Gastrocnemius medialis (tissue), 4 donors: ENCODE measurements at regions of chr14 and their contacts with region 1.

Region 1: GRCh38 chr14:92951912-92952471 is 29.0 kb downstream of the CHGA start:
- DNase-seq: peak; percentile 39 to 55
- ATAC-seq: peak; percentile 79 to 86
- H3K4me3 ChIP-seq: no peak overlapping the region
- H3K27ac ChIP-seq: no peak overlapping the region
- H3K4me1 ChIP-seq: peaks cover 0 to 3% of the 10 kb centered on the region in 2 donors
- H3K27me3 ChIP-seq: no peaks in the 10 kb centered on the region
- CTCF ChIP-seq: peak; percentile 81 to 95 (median 93)
- POLR2A ChIP-seq: no peak

Region 2: DNA sequence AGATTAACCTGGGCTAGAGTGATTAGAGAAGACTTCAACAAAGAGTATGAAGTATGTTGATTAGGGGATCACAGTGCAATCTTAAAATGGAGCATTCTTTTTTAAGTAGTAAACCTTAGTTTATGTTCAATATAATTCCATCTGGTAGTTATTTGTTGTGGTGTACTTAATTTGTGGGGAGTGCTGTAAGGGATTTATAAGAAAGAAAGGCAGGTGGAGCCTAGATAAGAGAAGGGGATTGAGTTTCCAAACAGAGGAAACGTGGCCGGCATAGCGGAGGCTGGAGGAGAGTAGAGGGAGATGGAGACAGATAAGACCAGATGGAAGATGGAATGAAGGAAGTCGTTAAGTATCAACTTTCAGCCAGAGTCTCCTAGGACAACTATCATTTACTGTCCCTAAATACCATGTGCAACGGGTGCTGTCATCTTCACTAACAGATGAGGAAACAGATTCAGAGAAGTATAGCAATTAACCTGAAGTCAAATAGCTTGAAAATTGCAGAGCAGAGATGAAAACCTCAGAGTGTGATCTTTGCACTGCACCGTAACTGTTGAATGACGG is 119.8 kb before region 1 on chr14:
- in situ Hi-C with region 1: no loop called
- intact Hi-C with region 1: no loop called
- DNase-seq: no peak
- ATAC-seq: no peak
- H3K4me3 ChIP-seq: no peak overlapping the region
- H3K27ac ChIP-seq: no peak overlapping the region
- H3K4me1 ChIP-seq: no peaks in the 10 kb centered on the region
- H3K27me3 ChIP-seq: no peaks in the 10 kb centered on the region
- CTCF ChIP-seq: no peak
- POLR2A ChIP-seq: no peak

Region 3: DNA sequence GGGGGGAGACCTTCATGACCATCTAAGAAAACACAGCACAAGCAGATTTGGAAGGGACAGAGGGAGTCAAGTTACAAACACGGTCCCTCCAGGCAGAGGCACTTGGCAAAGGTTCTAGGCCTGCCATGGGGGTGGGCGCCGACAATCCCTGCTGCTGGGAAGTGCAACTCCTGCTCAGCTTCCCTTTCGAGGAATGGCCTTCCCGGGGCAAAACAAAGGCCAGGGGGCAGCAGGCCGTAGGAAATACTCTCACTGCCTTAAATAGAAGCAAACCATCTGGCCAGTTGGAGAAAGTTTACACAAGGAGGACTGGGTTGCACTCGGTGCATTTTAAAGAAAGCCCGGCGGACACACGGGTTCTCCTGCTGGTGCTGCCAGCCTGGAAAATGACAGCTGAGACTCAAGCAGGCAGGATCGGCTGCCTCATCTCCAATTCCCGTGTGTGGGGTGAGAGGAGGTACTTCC is 97.9 kb after region 1 on chr14:
- in situ Hi-C with region 1: no loop called
- intact Hi-C with region 1: loop called (anchors 5 kb)
- DNase-seq: peak; percentile 62 to 64
- ATAC-seq: peak; percentile 82
- H3K4me3 ChIP-seq: peak overlapping the region in 1 of 4 donors; percentile 9
- H3K27ac ChIP-seq: peak overlapping the region in 3 of 4 donors; percentile 64 to 76 (median 71)
- H3K4me1 ChIP-seq: peaks cover 26 to 29% of the 10 kb centered on the region in 2 donors
- H3K27me3 ChIP-seq: no peaks in the 10 kb centered on the region
- CTCF ChIP-seq: no peak
- POLR2A ChIP-seq: no peak

Region 4: DNA sequence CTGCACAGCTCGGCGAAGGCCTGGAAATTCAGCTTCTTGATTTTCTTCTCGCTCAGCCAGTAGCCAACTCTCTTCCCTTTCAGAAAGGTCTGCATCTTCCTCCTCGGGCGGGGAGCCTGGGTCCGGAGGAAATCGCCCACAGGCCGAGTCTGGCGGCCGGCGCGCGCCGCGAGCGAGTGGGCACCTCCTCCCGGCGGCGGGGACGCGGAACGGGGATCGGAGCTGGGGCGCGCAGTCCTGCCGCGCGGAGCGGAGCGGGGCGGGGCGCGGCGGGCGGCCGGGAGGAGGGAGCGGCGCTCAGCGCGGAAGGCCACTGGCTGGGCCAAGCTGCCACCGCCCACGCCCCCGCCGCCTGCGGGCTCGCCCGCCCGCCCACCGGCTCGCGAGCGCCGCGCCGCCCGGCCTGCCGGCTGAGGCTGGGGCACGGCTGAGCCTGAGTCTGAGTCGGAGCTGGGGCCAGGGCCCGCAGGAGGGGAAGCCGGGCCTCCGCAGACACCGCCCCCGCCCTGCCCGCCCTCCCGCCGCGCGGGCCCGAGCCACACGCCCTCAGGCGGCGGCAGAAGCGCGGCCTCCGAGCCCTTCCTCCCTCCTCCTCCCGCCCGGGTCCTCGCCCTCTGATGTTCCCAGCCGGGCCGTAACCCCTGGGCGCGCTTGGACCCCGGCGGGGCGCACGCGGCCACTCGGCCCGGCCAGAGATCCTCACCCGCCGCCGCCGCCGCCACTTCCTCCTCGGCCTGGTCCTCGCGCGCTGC is 163.3 kb after region 1 on chr14:
- in situ Hi-C with region 1: no loop called
- intact Hi-C with region 1: loop called (anchors 1 kb)
- DNase-seq: peak; percentile 71 to 78
- ATAC-seq: peak; percentile 77 to 80
- H3K4me3 ChIP-seq: peak overlapping the region; percentile 83 to 94 (median 92)
- H3K27ac ChIP-seq: peak overlapping the region; percentile 95 to 96 (median 96)
- H3K4me1 ChIP-seq: peaks cover 24 to 29% of the 10 kb centered on the region in 2 donors
- H3K27me3 ChIP-seq: no peaks in the 10 kb centered on the region
- CTCF ChIP-seq: peak in 2 of 5 experiments; percentile 3 to 7
- POLR2A ChIP-seq: peak; percentile 58 to 69

Region 5: GRCh38 chr14:93132470-93133065 is 180.6 kb after region 1 on chr14:
- in situ Hi-C with region 1: loop called in 3 of 4 experiments (anchors 5 to 10 kb)
- intact Hi-C with region 1: no loop called
- DNase-seq: no peak
- ATAC-seq: peak in 1 of 2 donors; percentile 39
- H3K4me3 ChIP-seq: no peak overlapping the region
- H3K27ac ChIP-seq: no peak overlapping the region
- H3K4me1 ChIP-seq: no peaks in the 10 kb centered on the region
- H3K27me3 ChIP-seq: no peaks in the 10 kb centered on the region
- CTCF ChIP-seq: peak in 2 of 5 experiments; percentile 10 to 18
- POLR2A ChIP-seq: no peak

Region 6: DNA sequence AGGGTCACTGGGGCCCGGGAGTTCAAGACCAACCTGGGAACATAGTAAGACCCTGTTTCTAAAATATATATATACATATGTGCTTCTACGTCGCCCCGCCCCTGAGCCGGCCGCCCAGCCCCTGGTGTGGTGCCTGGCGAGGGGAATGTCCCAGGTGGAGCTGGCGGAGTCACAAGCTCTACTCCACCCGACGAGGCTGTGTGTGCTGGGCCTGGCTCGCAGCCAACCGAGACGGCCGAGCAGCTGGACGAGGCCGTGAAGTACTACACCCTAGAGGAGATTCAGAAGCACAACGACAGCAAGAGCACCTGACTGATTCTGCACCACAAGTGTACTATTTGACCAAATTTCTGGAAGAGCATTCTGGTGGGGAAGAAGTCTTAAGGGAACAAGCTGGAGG is 185.9 kb after region 1 on chr14:
- in situ Hi-C with region 1: loop called (anchors 5 to 10 kb)
- intact Hi-C with region 1: loop called (anchors 1 kb)
- DNase-seq: no peak
- ATAC-seq: no peak
- H3K4me3 ChIP-seq: no peak overlapping the region
- H3K27ac ChIP-seq: no peak overlapping the region
- H3K4me1 ChIP-seq: no peaks in the 10 kb centered on the region
- H3K27me3 ChIP-seq: no peaks in the 10 kb centered on the region
- CTCF ChIP-seq: no peak
- POLR2A ChIP-seq: no peak

Region 7: GRCh38 chr14:93142854-93143652 is 191.1 kb after region 1 on chr14:
- in situ Hi-C with region 1: loop called (anchors 5 to 10 kb)
- intact Hi-C with region 1: loop called (anchors 1 kb)
- DNase-seq: no peak
- ATAC-seq: no peak
- H3K4me3 ChIP-seq: no peak overlapping the region
- H3K27ac ChIP-seq: no peak overlapping the region
- H3K4me1 ChIP-seq: no peaks in the 10 kb centered on the region
- H3K27me3 ChIP-seq: no peaks in the 10 kb centered on the region
- CTCF ChIP-seq: no peak
- POLR2A ChIP-seq: no peak

Region 8: GRCh38 chr14:93811676-93812075 is 859.7 kb after region 1 on chr14:
- in situ Hi-C with region 1: no loop called
- intact Hi-C with region 1: no loop called
- DNase-seq: no peak
- ATAC-seq: no peak
- H3K4me3 ChIP-seq: no peak overlapping the region
- H3K27ac ChIP-seq: no peak overlapping the region
- H3K4me1 ChIP-seq: no peaks in the 10 kb centered on the region
- H3K27me3 ChIP-seq: no peaks in the 10 kb centered on the region
- CTCF ChIP-seq: no peak
- POLR2A ChIP-seq: no peak